HepG2 (cell line): ENCODE measurements at regions of chr5 and their contacts with region 1.

Region 1: GRCh38 chr5:1140171-1140817 is 28.4 kb upstream of the SLC12A7 start:
- DNase-seq: peak; percentile 54
- ATAC-seq: peak; percentile 58
- H3K4me3 ChIP-seq: peak overlapping the region in 1 of 3 experiments; percentile 31; a peak in 1 of 6 replicates
- H3K27ac ChIP-seq: no peak overlapping the region
- H3K4me1 ChIP-seq: peaks cover 67% of the 10 kb centered on the region
- H3K27me3 ChIP-seq: peaks cover 3 to 41% of the 10 kb centered on the region in 2 experiments; a peak in 4 of 5 replicates
- CTCF ChIP-seq: peak; percentile 99
- EP300 ChIP-seq: no peak
- POLR2A ChIP-seq: no peak
- RAD21 ChIP-seq: peak; percentile 95

Region 2: DNA sequence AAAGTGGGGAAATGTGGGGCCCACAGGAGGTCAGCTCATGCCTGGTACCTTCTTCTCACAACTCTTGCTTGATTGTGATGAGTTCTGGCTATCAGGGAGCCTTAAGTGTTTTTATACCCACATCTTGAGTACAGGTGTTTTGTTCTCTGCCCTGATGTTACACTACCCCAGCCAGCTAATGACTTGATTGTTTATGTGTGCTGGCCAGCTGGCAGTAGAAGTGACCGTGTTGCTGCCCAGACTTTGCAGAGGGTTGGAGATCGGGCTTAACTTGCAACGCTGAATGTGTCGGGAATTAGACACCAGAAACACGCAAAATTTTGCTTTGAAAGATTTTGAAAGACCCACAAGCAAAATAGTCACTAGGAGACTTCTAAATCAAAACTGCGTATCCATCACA is 338.8 kb before region 1 on chr5:
- CTCF ChIA-PET with region 1: no interaction called
- POLR2A ChIA-PET with region 1: no interaction called
- in situ Hi-C with region 1: no loop called
- intact Hi-C with region 1: no loop called
- DNase-seq: no peak
- ATAC-seq: no peak
- H3K4me3 ChIP-seq: no peak overlapping the region
- H3K27ac ChIP-seq: no peak overlapping the region
- H3K4me1 ChIP-seq: no peaks in the 10 kb centered on the region
- H3K27me3 ChIP-seq: no peaks in the 10 kb centered on the region; a peak in 1 of 5 replicates
- CTCF ChIP-seq: no peak
- EP300 ChIP-seq: no peak
- POLR2A ChIP-seq: no peak
- RAD21 ChIP-seq: no peak

Region 3: GRCh38 chr5:1052641-1053390 is 87.5 kb before region 1 on chr5:
- CTCF ChIA-PET with region 1: no interaction called
- POLR2A ChIA-PET with region 1: no interaction called
- in situ Hi-C with region 1: no loop called
- intact Hi-C with region 1: loop called (anchors 10 kb)
- DNase-seq: no peak
- ATAC-seq: no peak
- H3K4me3 ChIP-seq: no peak overlapping the region
- H3K27ac ChIP-seq: no peak overlapping the region
- H3K4me1 ChIP-seq: no peaks in the 10 kb centered on the region
- H3K27me3 ChIP-seq: no peaks in the 10 kb centered on the region
- CTCF ChIP-seq: no peak; the same call in 1 of the 2 replicates
- EP300 ChIP-seq: no peak
- POLR2A ChIP-seq: no peak
- RAD21 ChIP-seq: no peak

Region 4: DNA sequence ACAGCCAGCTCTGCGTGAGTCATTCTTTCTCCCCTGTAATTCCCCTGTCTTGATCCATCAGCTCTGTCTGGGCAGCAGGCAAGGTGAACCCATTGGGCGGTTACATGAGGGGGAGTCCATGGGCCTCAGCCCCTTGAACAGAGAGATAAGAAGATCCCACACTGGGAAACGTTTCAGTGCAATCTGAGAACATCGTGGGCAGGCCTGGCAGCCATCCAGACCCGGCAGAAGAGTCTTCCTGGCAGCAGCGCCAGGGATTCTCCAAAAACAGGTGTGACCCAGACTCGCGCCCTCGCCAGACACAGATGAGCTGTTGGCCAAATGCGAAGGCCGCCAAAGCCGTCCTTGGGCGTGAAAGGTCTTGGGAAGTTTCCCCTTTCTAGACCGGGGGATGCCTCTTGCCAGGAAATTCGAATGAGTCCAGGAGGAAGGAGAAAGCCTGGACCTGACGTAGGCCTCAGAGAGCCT is 22.0 kb before region 1 on chr5:
- CTCF ChIA-PET with region 1: no interaction called
- POLR2A ChIA-PET with region 1: interaction called, 15 read pairs
- in situ Hi-C with region 1: no loop called
- intact Hi-C with region 1: no loop called
- DNase-seq: no peak
- ATAC-seq: no peak
- H3K4me3 ChIP-seq: peak overlapping the region in 1 of 3 experiments; percentile 62; a peak in 1 of 6 replicates
- H3K27ac ChIP-seq: no peak overlapping the region
- H3K4me1 ChIP-seq: peaks cover 54% of the 10 kb centered on the region
- H3K27me3 ChIP-seq: peaks cover 28 to 97% of the 10 kb centered on the region in 2 experiments
- CTCF ChIP-seq: no peak
- EP300 ChIP-seq: no peak
- POLR2A ChIP-seq: no peak
- RAD21 ChIP-seq: no peak

Region 5: GRCh38 chr5:1161833-1162229 is 21.5 kb after region 1 on chr5:
- CTCF ChIA-PET with region 1: no interaction called
- POLR2A ChIA-PET with region 1: interaction called, 24 read pairs
- in situ Hi-C with region 1: no loop called
- intact Hi-C with region 1: loop called (anchors 2 kb)
- DNase-seq: no peak
- ATAC-seq: peak; percentile 34
- H3K4me3 ChIP-seq: peak overlapping the region; percentile 16 to 59 (median 18); a peak in 5 of 6 replicates
- H3K27ac ChIP-seq: peak overlapping the region; percentile 28
- H3K4me1 ChIP-seq: peaks cover 72% of the 10 kb centered on the region
- H3K27me3 ChIP-seq: peaks cover 9 to 53% of the 10 kb centered on the region in 2 experiments; a peak in 4 of 5 replicates
- CTCF ChIP-seq: no peak
- EP300 ChIP-seq: no peak
- POLR2A ChIP-seq: no peak
- RAD21 ChIP-seq: no peak